IMR-90 (cell line): ENCODE measurements at regions of chr9 and their contacts with region 1.

Region 1: GRCh38 chr9:94166237-94166963 is 82.1 kb downstream of the PTPDC1 start:
- DNase-seq: peak; percentile 99
- ATAC-seq: peak; percentile 78
- H3K4me3 ChIP-seq: peak overlapping the region; percentile 93
- H3K27ac ChIP-seq: peak overlapping the region; percentile 98
- H3K4me1 ChIP-seq: no peaks in the 10 kb centered on the region
- H3K27me3 ChIP-seq: no peaks in the 10 kb centered on the region
- CTCF ChIP-seq: 0 out of 2 replicates have a peak, but pooled peaks have one; percentile 24
- POLR2A ChIP-seq: peak; percentile 96
- RAD21 ChIP-seq: no peak

Region 2: GRCh38 chr9:94065535-94065961 is 100.9 kb before region 1 on chr9:
- CTCF ChIA-PET with region 1: interaction called, 8 read pairs
- POLR2A ChIA-PET with region 1: no interaction called
- dilution Hi-C with region 1: no loop called
- in situ Hi-C with region 1: no loop called
- intact Hi-C with region 1: loop called (anchors 2 kb)
- DNase-seq: peak; percentile 89
- ATAC-seq: peak; percentile 95
- H3K4me3 ChIP-seq: no peak overlapping the region
- H3K27ac ChIP-seq: no peak overlapping the region
- H3K4me1 ChIP-seq: no peaks in the 10 kb centered on the region
- H3K27me3 ChIP-seq: no peaks in the 10 kb centered on the region
- CTCF ChIP-seq: peak; percentile 80
- POLR2A ChIP-seq: no peak
- RAD21 ChIP-seq: peak; percentile 87

Region 3: DNA sequence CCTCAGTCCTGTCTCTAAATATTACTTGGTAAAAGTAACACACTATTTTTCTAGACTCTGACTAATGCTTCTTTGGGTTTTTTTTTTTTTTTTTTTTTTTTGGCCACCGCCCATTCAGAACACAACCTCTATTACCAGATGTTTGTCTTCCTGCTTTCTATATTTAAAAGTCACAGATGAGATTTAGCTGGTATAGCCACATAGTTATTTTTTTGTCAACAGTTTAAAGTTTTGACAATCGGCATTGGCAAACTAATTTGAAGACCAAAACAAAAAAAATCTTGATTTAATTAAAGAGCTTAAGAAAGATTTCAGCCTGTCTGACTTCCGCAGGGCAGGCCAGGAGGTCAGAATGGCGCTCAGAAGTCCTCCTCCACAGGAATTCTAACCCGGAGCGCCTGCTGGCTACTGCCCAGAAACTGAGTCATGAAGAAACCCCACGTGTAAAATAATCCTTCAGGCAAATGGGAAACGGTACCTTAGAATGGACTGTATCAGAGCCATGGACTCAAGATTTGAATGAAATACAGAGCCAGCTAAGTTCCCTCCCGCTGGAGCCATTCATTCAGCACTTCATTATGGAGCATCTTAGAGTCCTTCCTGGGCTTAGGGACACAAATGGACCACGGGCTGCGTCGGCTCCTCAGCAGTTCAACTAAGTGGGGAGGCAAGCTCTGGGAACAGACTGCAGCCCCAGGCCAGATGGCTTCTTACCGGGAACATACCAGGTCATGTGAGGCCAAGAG is 26.6 kb before region 1 on chr9:
- CTCF ChIA-PET with region 1: no interaction called
- POLR2A ChIA-PET with region 1: interaction called, 13 read pairs
- dilution Hi-C with region 1: no loop called
- in situ Hi-C with region 1: no loop called
- intact Hi-C with region 1: loop called (anchors 1 kb)
- DNase-seq: peak; percentile 96
- ATAC-seq: peak; percentile 89
- H3K4me3 ChIP-seq: no peak overlapping the region
- H3K27ac ChIP-seq: peak overlapping the region; percentile 93
- H3K4me1 ChIP-seq: peaks cover 24% of the 10 kb centered on the region
- H3K27me3 ChIP-seq: no peaks in the 10 kb centered on the region
- CTCF ChIP-seq: no peak
- POLR2A ChIP-seq: no peak; the same call in 1 of the 2 replicates
- RAD21 ChIP-seq: no peak

Region 4: GRCh38 chr9:94259077-94259892 is 92.9 kb after region 1 on chr9 and contains the start of gene ZNF169:
- CTCF ChIA-PET with region 1: no interaction called
- POLR2A ChIA-PET with region 1: no interaction called
- dilution Hi-C with region 1: no loop called
- in situ Hi-C with region 1: loop called (anchors 25 kb)
- intact Hi-C with region 1: no loop called
- DNase-seq: peak; percentile 82
- ATAC-seq: peak; percentile 100
- H3K4me3 ChIP-seq: peak within 1 kb of the TSS; percentile 66
- H3K27ac ChIP-seq: peak within 1 kb of the TSS; percentile 65
- H3K4me1 ChIP-seq: no peaks in the 10 kb centered on the region
- H3K27me3 ChIP-seq: peaks cover 3% of the 10 kb centered on the region; the same call in 1 of the 2 replicates
- CTCF ChIP-seq: no peak
- POLR2A ChIP-seq: peak; percentile 57
- RAD21 ChIP-seq: no peak
- total RNA-seq, gene ZNF169: 2.7 and 4.4 TPM in 2 replicates